Naive thymus-derived CD4-positive, alpha-beta T cell (primary cell): ENCODE measurements at regions of chr11 and their contacts with region 1.

Region 1: GRCh38 chr11:124837491-124837856 is 27.8 kb upstream of the ROBO3 start:
- DNase-seq: peak in 5 of 9 donors; percentile 13 to 35 (median 33)
- ATAC-seq: peak; percentile 63
- H3K4me3 ChIP-seq: no peak overlapping the region
- H3K4me3 Mint-ChIP-seq: peak overlapping the region in 6 of 10 donors; percentile 3 to 83 (median 74)
- H3K27ac ChIP-seq: no peak overlapping the region
- H3K27ac Mint-ChIP-seq: peak overlapping the region in 1 of 9 donors; percentile 35
- H3K4me1 ChIP-seq: no peaks in the 10 kb centered on the region
- H3K4me1 Mint-ChIP-seq: peaks cover 9 to 25% (median 16%) of the 10 kb centered on the region in 7 donors
- H3K27me3 ChIP-seq: peaks cover 18 to 20% of the 10 kb centered on the region in 2 donors
- H3K27me3 Mint-ChIP-seq: peaks cover 58 to 85% (median 67%) of the 10 kb centered on the region in 5 donors

Region 2: DNA sequence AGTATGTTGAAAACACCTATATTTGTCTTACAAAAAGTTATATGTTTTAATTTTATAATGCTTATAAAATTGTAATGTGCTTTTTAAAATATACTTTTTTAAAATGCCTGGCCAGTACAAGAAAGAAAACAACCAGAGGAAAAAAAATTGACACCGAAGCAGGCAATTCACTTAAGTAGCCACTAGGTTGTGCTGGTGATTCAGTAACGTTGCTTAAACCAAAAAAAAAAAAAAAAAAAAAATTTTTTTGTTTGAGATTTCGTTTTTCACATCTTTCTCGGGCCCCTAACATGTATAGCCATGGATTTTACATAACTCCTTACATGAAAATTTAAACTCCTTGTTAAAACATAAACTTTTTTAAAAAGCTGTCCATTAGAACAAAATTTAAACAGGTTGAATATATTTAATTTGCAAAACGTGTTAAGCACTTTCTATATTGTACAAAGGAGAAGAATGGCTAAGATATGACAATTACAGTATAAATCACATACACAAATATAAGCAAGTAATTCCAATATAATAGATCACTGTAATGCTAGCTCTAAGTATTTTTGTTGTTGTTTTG is 422.0 kb before region 1 on chr11:
- CTCF ChIA-PET with region 1: interaction called, 3 read pairs
- POLR2A ChIA-PET with region 1: no interaction called
- intact Hi-C with region 1: loop called in 1 of 2 experiments (anchors 5 kb)
- DNase-seq: peak in 3 of 9 donors; percentile 0 to 11 (median 2)
- ATAC-seq: no peak
- H3K4me3 ChIP-seq: no peak overlapping the region
- H3K4me3 Mint-ChIP-seq: no peak overlapping the region
- H3K27ac ChIP-seq: no peak overlapping the region
- H3K27ac Mint-ChIP-seq: no peak overlapping the region
- H3K4me1 ChIP-seq: no peaks in the 10 kb centered on the region
- H3K4me1 Mint-ChIP-seq: peaks cover 0 to 2% (median 0%) of the 10 kb centered on the region in 7 donors
- H3K27me3 ChIP-seq: no peaks in the 10 kb centered on the region
- H3K27me3 Mint-ChIP-seq: peaks cover 6 to 35% (median 26%) of the 10 kb centered on the region in 5 donors

Region 3: DNA sequence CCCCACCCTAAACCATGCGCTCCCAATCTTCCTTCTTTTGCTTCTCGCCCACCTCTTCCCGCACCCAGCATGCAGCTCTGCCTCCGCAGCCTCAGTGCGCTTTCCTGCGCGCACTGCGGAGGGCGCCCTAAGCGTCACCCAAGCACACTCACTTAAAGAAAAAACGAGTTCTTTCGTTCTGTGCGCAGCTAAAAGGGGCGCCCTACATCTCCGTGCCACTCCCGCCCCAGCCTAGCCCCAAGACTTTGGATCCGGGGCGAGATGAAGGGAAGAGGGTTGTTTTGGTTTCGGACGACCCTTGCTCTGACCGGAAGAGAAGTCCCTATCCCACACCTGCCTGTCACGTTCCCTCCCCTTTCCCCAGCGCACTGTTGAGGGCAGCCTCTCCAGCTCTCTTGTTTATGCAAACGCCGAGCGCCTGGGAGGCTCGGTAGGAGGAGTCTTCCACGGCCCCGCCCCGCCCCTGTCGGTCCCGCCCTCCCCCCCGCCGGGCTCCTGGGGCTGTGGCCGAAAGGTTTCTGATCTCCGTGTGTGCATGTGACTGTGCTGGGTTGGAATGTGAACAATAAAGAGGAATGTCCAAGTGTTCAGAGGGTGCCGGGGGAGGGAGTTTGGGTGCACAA is 90.7 kb before region 1 on chr11:
- CTCF ChIA-PET with region 1: interaction called, 4 read pairs
- POLR2A ChIA-PET with region 1: interaction called, 3 read pairs
- intact Hi-C with region 1: loop called (anchors 1 kb)
- DNase-seq: peak; percentile 66 to 88 (median 85)
- ATAC-seq: peak; percentile 93
- H3K4me3 ChIP-seq: peak overlapping the region; percentile 99
- H3K4me3 Mint-ChIP-seq: peak overlapping the region; percentile 91 to 100 (median 98)
- H3K27ac ChIP-seq: peak overlapping the region; percentile 72
- H3K27ac Mint-ChIP-seq: peak overlapping the region; percentile 91 to 98 (median 96)
- H3K4me1 ChIP-seq: peaks cover 0 to 3% of the 10 kb centered on the region in 2 donors
- H3K4me1 Mint-ChIP-seq: peaks cover 4 to 37% (median 19%) of the 10 kb centered on the region in 7 donors
- H3K27me3 ChIP-seq: no peaks in the 10 kb centered on the region
- H3K27me3 Mint-ChIP-seq: peaks cover 0 to 22% (median 0%) of the 10 kb centered on the region in 5 donors

Region 4: GRCh38 chr11:124800226-124800929 is 37.1 kb before region 1 on chr11 and contains the start of gene MSANTD2:
- CTCF ChIA-PET with region 1: interaction called, 5 read pairs
- POLR2A ChIA-PET with region 1: no interaction called
- intact Hi-C with region 1: loop called (anchors 1 kb)
- DNase-seq: peak; percentile 65 to 89 (median 73)
- ATAC-seq: peak; percentile 92
- H3K4me3 ChIP-seq: peak within 1 kb of the TSS; percentile 71
- H3K4me3 Mint-ChIP-seq: peak within 1 kb of the TSS; percentile 88 to 97 (median 96)
- H3K27ac ChIP-seq: peak within 1 kb of the TSS; percentile 93
- H3K27ac Mint-ChIP-seq: peak within 1 kb of the TSS; percentile 88 to 98 (median 94)
- H3K4me1 ChIP-seq: peaks cover 8 to 14% of the 10 kb centered on the region in 2 donors
- H3K4me1 Mint-ChIP-seq: peaks cover 13 to 38% (median 32%) of the 10 kb centered on the region in 7 donors
- H3K27me3 ChIP-seq: no peaks in the 10 kb centered on the region
- H3K27me3 Mint-ChIP-seq: peaks cover 0 to 24% (median 0%) of the 10 kb centered on the region in 5 donors
- total RNA-seq, gene MSANTD2: 9.1 to 29.5 (median 14.4) TPM

Region 5: DNA sequence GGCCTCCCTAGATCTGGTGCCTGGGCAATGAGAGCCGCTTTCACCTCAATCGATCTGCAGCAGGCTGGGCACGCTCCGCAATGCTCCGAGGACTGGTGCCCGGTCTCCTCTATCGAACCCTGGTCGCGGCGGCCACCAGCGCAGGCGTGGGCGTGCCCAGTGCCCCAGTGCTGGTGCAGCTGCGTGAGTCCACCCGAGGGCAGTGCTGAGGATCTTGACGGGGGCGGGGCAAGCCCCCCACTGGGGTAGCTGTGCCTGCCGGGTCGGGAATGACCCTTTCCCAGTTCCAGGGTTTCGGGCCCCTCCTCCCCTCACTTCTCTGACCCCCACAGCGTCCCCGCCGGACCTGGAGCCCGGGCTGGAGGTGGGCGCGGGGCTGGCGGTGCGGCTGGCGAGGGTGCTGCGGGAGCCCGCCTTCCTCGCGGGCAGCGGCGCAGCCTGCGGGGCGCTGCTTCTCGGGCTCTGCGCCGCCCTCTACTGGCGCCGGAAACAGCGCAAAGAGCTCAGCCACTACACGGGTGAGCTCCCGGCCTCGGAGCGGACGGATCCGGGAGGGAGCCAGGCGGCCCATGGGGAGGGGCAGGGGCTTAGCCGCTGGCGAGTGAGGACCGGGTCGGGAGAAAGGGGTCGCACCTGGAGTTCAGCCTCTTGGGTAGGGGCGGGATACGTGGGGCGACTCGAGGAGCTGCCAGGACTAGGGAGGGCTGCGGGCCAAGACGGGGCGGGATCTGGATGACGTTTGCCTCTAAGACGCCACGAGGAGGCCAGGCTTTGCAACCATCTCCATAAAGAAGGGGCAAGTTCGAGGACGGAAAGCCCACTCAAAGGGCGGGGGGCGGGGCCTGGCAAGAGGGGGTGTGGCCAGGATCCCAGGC is 38.7 kb after region 1 on chr11:
- CTCF ChIA-PET with region 1: no interaction called
- POLR2A ChIA-PET with region 1: interaction called, 3 read pairs
- intact Hi-C with region 1: loop called (anchors 2 kb)
- DNase-seq: peak; percentile 71 to 84 (median 81)
- ATAC-seq: peak; percentile 94
- H3K4me3 ChIP-seq: peak overlapping the region; percentile 98
- H3K4me3 Mint-ChIP-seq: peak overlapping the region; percentile 85 to 94 (median 90)
- H3K27ac ChIP-seq: peak overlapping the region; percentile 79
- H3K27ac Mint-ChIP-seq: peak overlapping the region; percentile 77 to 95 (median 92)
- H3K4me1 ChIP-seq: peaks cover 7 to 9% of the 10 kb centered on the region in 2 donors
- H3K4me1 Mint-ChIP-seq: peaks cover 11 to 34% (median 24%) of the 10 kb centered on the region in 7 donors
- H3K27me3 ChIP-seq: peaks cover 0 to 3% of the 10 kb centered on the region in 2 donors
- H3K27me3 Mint-ChIP-seq: peaks cover 18 to 49% (median 34%) of the 10 kb centered on the region in 5 donors

Region 6: GRCh38 chr11:125147280-125147679 is 309.8 kb after region 1 on chr11:
- CTCF ChIA-PET with region 1: no interaction called
- POLR2A ChIA-PET with region 1: no interaction called
- intact Hi-C with region 1: no loop called
- DNase-seq: no peak
- ATAC-seq: no peak
- H3K4me3 ChIP-seq: no peak overlapping the region
- H3K4me3 Mint-ChIP-seq: no peak overlapping the region
- H3K27ac ChIP-seq: no peak overlapping the region
- H3K27ac Mint-ChIP-seq: no peak overlapping the region
- H3K4me1 ChIP-seq: no peaks in the 10 kb centered on the region
- H3K4me1 Mint-ChIP-seq: no peaks in the 10 kb centered on the region
- H3K27me3 ChIP-seq: peaks cover 0 to 4% of the 10 kb centered on the region in 2 donors
- H3K27me3 Mint-ChIP-seq: peaks cover 0 to 23% (median 8%) of the 10 kb centered on the region in 5 donors